ENCODE measurements at regions of chr2 and their contacts with region 1.

Region 1: DNA sequence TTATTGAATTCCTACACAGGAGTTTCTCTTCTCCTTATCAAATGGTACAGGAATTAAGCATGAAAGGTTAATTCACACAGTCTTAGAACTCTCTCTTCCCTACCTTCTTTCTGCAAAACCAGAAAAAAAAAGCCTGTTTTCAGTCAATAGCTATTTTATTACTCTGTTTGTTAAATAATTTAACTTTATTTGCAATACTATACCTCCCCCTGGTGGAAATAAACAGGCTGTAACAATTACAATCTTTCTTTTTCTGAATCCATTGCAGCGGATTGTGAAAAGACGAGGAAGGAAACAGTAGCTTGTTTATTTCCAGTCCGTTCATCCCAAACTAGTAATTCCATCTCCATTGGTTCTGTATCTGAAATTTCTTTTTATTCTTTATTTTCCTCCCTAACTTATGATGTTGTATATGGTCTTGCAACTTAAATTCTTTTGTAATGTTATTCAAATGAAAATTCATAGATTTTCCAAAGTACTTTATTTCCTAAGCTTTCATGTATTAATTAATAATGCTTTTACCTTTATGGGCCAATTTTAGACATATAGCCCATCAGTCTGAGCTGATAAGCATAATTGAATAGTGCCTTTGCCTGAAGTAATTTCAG is 165.2 kb downstream of the SH3BP4 start:
- DNase-seq: no peak
- H3K4me3 ChIP-seq: no peak overlapping the region
- CTCF ChIP-seq: peak; percentile 22

Region 2: DNA sequence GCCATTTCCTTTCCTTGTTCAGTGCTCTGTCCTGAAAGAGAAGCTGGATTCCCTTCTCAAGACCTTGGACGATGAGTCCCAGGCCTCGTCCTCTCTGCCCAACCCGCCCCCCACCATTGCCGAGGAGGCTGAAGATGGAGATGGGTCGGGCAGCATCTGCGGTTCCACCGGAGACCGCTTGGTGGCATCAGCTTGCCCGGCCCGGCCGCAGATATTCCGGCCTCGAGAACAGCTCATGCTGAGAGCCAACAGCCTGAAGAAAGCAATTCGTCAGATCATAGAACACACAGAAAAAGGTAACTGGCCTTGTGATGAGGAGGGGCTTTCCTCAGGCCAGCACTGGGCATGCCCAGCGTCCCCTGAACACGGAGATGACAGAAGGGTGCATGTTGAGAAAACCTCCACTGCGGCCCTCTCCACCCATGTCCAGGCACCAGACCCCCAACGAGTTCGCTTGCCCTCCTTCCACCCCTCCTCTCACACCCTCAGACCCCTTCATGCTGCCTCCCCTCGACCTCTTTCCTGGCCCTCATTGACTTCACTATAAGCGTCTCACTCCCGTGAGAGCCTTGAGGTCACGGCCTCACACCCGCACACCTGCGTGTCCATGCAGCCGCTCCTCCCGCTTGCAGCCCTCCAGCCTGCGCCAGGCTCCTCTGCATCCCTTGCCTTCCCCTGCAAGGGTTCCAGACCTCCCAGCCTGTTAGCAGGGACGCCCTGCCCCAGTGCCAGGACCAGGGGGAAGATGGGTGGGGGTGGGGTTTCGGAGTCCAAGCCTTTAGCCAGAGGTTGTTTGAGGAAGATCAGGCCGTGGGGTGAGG is 1667.7 kb before region 1 on chr2:
- CTCF ChIA-PET with region 1: interaction called, 11 read pairs
- POLR2A ChIA-PET with region 1: no interaction called
- DNase-seq: no peak
- H3K4me3 ChIP-seq: no peak overlapping the region
- CTCF ChIP-seq: peak; percentile 84

Region 3: GRCh38 chr2:234512884-234513669 is 603.9 kb before region 1 on chr2:
- CTCF ChIA-PET with region 1: interaction called, 11 read pairs
- POLR2A ChIA-PET with region 1: no interaction called
- DNase-seq: no peak
- H3K4me3 ChIP-seq: no peak overlapping the region
- CTCF ChIP-seq: no peak

Region 4: DNA sequence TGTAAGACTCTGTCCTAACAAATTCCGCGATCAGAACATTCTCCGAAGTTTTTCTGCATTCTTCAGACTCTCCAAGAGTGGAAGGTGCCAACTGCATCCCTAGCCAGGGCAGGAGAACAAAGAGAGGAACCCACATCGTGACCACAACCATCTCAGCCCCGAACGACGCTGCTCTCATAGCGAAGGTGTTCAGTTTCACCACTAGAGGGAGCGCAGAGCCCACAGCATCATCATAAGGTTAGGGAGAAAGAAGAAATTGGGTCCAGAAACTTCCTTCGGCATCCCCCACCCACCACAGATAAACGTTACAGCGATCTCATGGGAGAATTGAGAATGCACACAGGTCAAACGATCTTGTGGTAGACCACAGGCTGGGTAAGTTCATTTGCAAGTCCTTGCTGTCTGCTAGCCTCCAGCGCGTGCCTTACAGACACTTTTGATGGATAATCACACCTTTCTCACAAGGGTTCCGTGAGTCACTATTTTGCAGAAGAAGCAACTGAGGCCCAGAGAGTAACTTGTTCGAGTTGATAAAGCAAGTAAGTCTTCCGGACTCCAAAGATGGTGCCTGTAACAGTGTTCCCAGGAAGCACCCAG is 566.4 kb before region 1 on chr2:
- CTCF ChIA-PET with region 1: interaction called, 154 read pairs
- POLR2A ChIA-PET with region 1: no interaction called
- DNase-seq: no peak
- H3K4me3 ChIP-seq: no peak overlapping the region
- CTCF ChIP-seq: peak; percentile 92

Region 5: GRCh38 chr2:234564699-234565098 is 552.3 kb before region 1 on chr2:
- CTCF ChIA-PET with region 1: interaction called, 34 read pairs
- POLR2A ChIA-PET with region 1: no interaction called
- DNase-seq: no peak
- H3K4me3 ChIP-seq: no peak overlapping the region
- CTCF ChIP-seq: peak; percentile 42

Region 6: GRCh38 chr2:235129850-235130249 is 12.9 kb after region 1 on chr2:
- CTCF ChIA-PET with region 1: interaction called, 20 read pairs
- POLR2A ChIA-PET with region 1: no interaction called
- DNase-seq: no peak
- H3K4me3 ChIP-seq: no peak overlapping the region
- CTCF ChIP-seq: no peak

Region 7: DNA sequence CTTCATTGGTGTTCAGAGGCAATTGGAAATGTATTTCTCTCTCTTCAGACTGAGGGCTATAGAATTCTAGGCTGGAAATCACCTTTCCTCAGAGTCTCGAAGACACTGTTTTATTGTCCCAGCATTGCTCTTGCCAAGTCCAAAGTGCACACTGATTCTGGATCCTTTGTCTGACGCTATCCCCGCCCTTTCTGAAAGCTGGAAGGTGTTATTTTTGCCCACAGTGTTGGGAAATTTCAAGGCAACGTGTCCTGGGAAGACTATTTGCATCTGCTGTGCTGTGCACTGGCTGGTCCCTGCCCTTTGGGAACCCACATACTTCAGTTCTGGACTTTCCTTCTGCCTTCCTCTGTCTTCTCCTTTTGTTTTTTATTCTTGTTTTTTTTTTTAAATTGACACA is 25.6 kb after region 1 on chr2:
- CTCF ChIA-PET with region 1: no interaction called
- POLR2A ChIA-PET with region 1: no interaction called
- DNase-seq: no peak
- H3K4me3 ChIP-seq: no peak overlapping the region
- CTCF ChIP-seq: no peak

Measured in AG04449 (cell line).